ENCODE measurements at regions of chr7 and their contacts with region 1.

Region 1: GRCh38 chr7:27112955-27113949 is 10.8 kb upstream of the HOXA2 start:
- DNase-seq: no peak
- H3K4me3 ChIP-seq: peak overlapping the region; percentile 33 to 71 (median 42)
- H3K27ac ChIP-seq: peak overlapping the region; percentile 42 to 90 (median 86)
- H3K4me1 ChIP-seq: peaks cover 0 to 61% (median 28%) of the 10 kb centered on the region in 6 donors
- H3K27me3 ChIP-seq: no peaks in the 10 kb centered on the region
- CTCF ChIP-seq: no peak
- POLR2A ChIP-seq: no peak

Region 2: GRCh38 chr7:26735976-26736600 is 377.2 kb before region 1 on chr7:
- intact Hi-C with region 1: no loop called
- DNase-seq: no peak
- H3K4me3 ChIP-seq: no peak overlapping the region
- H3K27ac ChIP-seq: no peak overlapping the region
- H3K4me1 ChIP-seq: no peaks in the 10 kb centered on the region
- H3K27me3 ChIP-seq: no peaks in the 10 kb centered on the region
- CTCF ChIP-seq: no peak
- POLR2A ChIP-seq: no peak

Region 3: DNA sequence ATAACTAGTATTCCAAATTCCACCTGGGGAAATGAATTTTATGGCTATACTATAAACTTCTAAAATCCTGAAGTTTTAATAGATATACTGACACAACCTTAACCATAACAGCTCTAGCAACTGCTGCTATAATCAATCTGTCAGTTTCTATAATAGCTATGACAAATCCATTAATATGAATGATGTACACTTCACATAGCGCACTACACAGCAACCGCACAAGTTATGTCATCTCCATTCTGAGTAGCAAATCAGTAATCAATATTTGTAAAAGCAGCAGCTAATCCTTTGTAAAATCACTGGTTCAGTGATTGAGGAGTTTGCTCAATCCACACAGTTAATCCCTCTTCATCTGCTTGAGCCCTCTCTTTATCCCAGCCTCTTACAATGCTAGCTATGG is 354.1 kb before region 1 on chr7:
- intact Hi-C with region 1: loop called (anchors 10 kb)
- DNase-seq: no peak
- H3K4me3 ChIP-seq: no peak overlapping the region
- H3K27ac ChIP-seq: no peak overlapping the region
- H3K4me1 ChIP-seq: no peaks in the 10 kb centered on the region
- H3K27me3 ChIP-seq: no peaks in the 10 kb centered on the region
- CTCF ChIP-seq: no peak
- POLR2A ChIP-seq: no peak

Measured in spleen (tissue), 13 donors.